Right cardiac atrium (tissue), 5 donors: ENCODE measurements at regions of chr1 and their contacts with region 1.

Region 1: GRCh38 chr1:157490467-157491165 is 61.7 kb downstream of the FCRL5 start:
- DNase-seq: peak; percentile 47 to 82 (median 69)
- ATAC-seq: peak; percentile 48 to 61
- H3K4me3 ChIP-seq: no peak overlapping the region
- H3K27ac ChIP-seq: no peak overlapping the region
- H3K4me1 ChIP-seq: no peaks in the 10 kb centered on the region
- H3K27me3 ChIP-seq: no peaks in the 10 kb centered on the region

Region 2: GRCh38 chr1:157176591-157177121 is 314.0 kb before region 1 on chr1:
- intact Hi-C with region 1: loop called in 1 of 4 experiments (anchors 5 kb)
- DNase-seq: no peak
- ATAC-seq: no peak
- H3K4me3 ChIP-seq: no peak overlapping the region
- H3K27ac ChIP-seq: no peak overlapping the region
- H3K4me1 ChIP-seq: no peaks in the 10 kb centered on the region
- H3K27me3 ChIP-seq: no peaks in the 10 kb centered on the region

Region 3: GRCh38 chr1:157193702-157194391 is 296.8 kb before region 1 on chr1:
- intact Hi-C with region 1: loop called (anchors 5 kb)
- DNase-seq: peak; percentile 43 to 77 (median 76)
- ATAC-seq: no peak
- H3K4me3 ChIP-seq: no peak overlapping the region
- H3K27ac ChIP-seq: no peak overlapping the region
- H3K4me1 ChIP-seq: no peaks in the 10 kb centered on the region
- H3K27me3 ChIP-seq: no peaks in the 10 kb centered on the region

Region 4: DNA sequence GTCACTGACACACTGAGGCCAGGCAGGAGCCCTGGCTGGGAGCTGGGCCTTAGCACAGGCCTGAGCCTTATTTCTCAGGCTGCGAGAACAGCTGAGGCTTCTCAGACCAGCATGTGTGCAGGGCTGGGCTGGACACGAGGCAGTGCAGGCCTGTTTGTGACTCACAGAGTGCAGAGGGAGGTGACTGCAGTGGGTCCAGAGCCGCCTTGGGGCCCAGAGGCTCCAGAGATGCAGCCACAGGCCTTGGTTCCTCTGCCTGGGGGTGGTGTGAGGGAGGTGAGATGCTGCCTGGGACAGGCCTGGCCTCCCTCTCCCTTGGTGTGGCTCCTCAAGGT is 291.2 kb before region 1 on chr1:
- intact Hi-C with region 1: loop called (anchors 5 kb)
- DNase-seq: no peak
- ATAC-seq: no peak
- H3K4me3 ChIP-seq: no peak overlapping the region
- H3K27ac ChIP-seq: no peak overlapping the region
- H3K4me1 ChIP-seq: no peaks in the 10 kb centered on the region
- H3K27me3 ChIP-seq: no peaks in the 10 kb centered on the region

Region 5: GRCh38 chr1:157307491-157307890 is 183.1 kb before region 1 on chr1:
- intact Hi-C with region 1: loop called in 1 of 4 experiments (anchors 5 kb)
- DNase-seq: no peak
- ATAC-seq: no peak
- H3K4me3 ChIP-seq: no peak overlapping the region
- H3K27ac ChIP-seq: no peak overlapping the region
- H3K4me1 ChIP-seq: no peaks in the 10 kb centered on the region
- H3K27me3 ChIP-seq: no peaks in the 10 kb centered on the region

Region 6: GRCh38 chr1:157369808-157370521 is 120.7 kb before region 1 on chr1:
- intact Hi-C with region 1: loop called in 3 of 4 experiments (anchors 5 kb)
- DNase-seq: no peak
- ATAC-seq: peak; percentile 64 to 68
- H3K4me3 ChIP-seq: no peak overlapping the region
- H3K27ac ChIP-seq: no peak overlapping the region
- H3K4me1 ChIP-seq: no peaks in the 10 kb centered on the region
- H3K27me3 ChIP-seq: no peaks in the 10 kb centered on the region

Region 7: DNA sequence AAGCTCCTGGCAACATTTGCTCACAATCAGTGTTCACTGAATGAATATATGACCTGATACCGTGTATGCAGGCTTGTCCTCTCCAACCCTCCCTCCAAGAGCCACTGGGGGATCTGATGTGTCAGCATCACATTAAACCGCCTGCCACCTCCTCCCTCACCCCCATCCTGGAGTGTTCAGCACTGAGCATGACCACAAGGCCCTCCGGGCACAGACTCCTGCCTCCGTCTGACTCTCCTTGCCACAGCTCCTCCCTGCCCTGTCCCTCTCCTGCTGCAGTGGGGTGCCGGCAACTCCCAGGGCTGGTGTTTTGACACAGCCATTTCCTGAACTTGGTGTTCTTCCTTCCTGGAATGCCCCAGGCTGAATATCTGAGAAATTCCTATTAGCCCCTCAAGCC is 75.0 kb before region 1 on chr1:
- intact Hi-C with region 1: no loop called
- DNase-seq: no peak
- ATAC-seq: no peak
- H3K4me3 ChIP-seq: no peak overlapping the region
- H3K27ac ChIP-seq: no peak overlapping the region
- H3K4me1 ChIP-seq: no peaks in the 10 kb centered on the region
- H3K27me3 ChIP-seq: no peaks in the 10 kb centered on the region

Region 8: GRCh38 chr1:157659576-157660247 is 169.1 kb after region 1 on chr1:
- intact Hi-C with region 1: no loop called
- DNase-seq: no peak
- ATAC-seq: no peak
- H3K4me3 ChIP-seq: no peak overlapping the region
- H3K27ac ChIP-seq: no peak overlapping the region
- H3K4me1 ChIP-seq: no peaks in the 10 kb centered on the region
- H3K27me3 ChIP-seq: no peaks in the 10 kb centered on the region